IMR-90 (cell line): ENCODE measurements at regions of chr13 and their contacts with region 1.

Region 1: GRCh38 chr13:79003989-79004898 is 345.3 kb upstream of the OBI1 start:
- DNase-seq: no peak
- ATAC-seq: no peak
- H3K4me3 ChIP-seq: no peak overlapping the region
- H3K27ac ChIP-seq: no peak overlapping the region
- H3K4me1 ChIP-seq: no peaks in the 10 kb centered on the region
- H3K27me3 ChIP-seq: no peaks in the 10 kb centered on the region
- CTCF ChIP-seq: no peak
- POLR2A ChIP-seq: no peak
- RAD21 ChIP-seq: no peak

Region 2: GRCh38 chr13:79393564-79394249 is 389.5 kb after region 1 on chr13:
- CTCF ChIA-PET with region 1: no interaction called
- POLR2A ChIA-PET with region 1: no interaction called
- dilution Hi-C with region 1: no loop called
- in situ Hi-C with region 1: no loop called
- intact Hi-C with region 1: loop called (anchors 5 kb)
- DNase-seq: no peak
- ATAC-seq: no peak
- H3K4me3 ChIP-seq: no peak overlapping the region
- H3K27ac ChIP-seq: no peak overlapping the region
- H3K4me1 ChIP-seq: no peaks in the 10 kb centered on the region
- H3K27me3 ChIP-seq: no peaks in the 10 kb centered on the region
- CTCF ChIP-seq: no peak
- POLR2A ChIP-seq: no peak
- RAD21 ChIP-seq: no peak